Stomach (tissue), 19 donors: ENCODE measurements at regions of chr5 and their contacts with region 1.

Region 1: GRCh38 chr5:177454397-177455035 is 7.9 kb downstream of the PRR7 start:
- DNase-seq: peak; percentile 96 to 97
- H3K4me3 ChIP-seq: peak overlapping the region; percentile 56 to 75 (median 66)
- H3K27ac ChIP-seq: peak overlapping the region; percentile 70 to 91 (median 88)
- H3K4me1 ChIP-seq: peaks cover 20 to 46% (median 31%) of the 10 kb centered on the region in 4 donors
- H3K27me3 ChIP-seq: peaks cover 0 to 27% (median 0%) of the 10 kb centered on the region in 3 donors
- CTCF ChIP-seq: peak in 6 of 7 experiments; percentile 55 to 97 (median 90)
- EP300 ChIP-seq: no peak
- POLR2A ChIP-seq: no peak

Region 2: GRCh38 chr5:177403792-177404640 is 50.5 kb before region 1 on chr5:
- intact Hi-C with region 1: loop called (anchors 5 kb)
- DNase-seq: peak; percentile 91 to 94
- H3K4me3 ChIP-seq: peak overlapping the region; percentile 45 to 79 (median 57)
- H3K27ac ChIP-seq: peak overlapping the region in 4 of 5 donors; percentile 27 to 62 (median 41)
- H3K4me1 ChIP-seq: peaks cover 31 to 52% (median 45%) of the 10 kb centered on the region in 4 donors
- H3K27me3 ChIP-seq: peaks cover 6 to 61% (median 47%) of the 10 kb centered on the region in 3 donors
- CTCF ChIP-seq: peak in 5 of 7 experiments; percentile 56 to 72 (median 65)
- EP300 ChIP-seq: no peak
- POLR2A ChIP-seq: no peak